Caco-2 (cell line): ENCODE measurements at regions of chr6 and their contacts with region 1.

Region 1: GRCh38 chr6:104771258-104771832 is 88.4 kb downstream of the HACE1 start:
- DNase-seq: no peak
- H3K4me3 ChIP-seq: no peak overlapping the region
- H3K4me3 Mint-ChIP-seq: no peak overlapping the region
- H3K27ac Mint-ChIP-seq: no peak overlapping the region
- H3K4me1 ChIP-seq: no peaks in the 10 kb centered on the region
- H3K4me1 Mint-ChIP-seq: no peaks in the 10 kb centered on the region
- H3K27me3 ChIP-seq: no peaks in the 10 kb centered on the region
- H3K27me3 Mint-ChIP-seq: no peaks in the 10 kb centered on the region
- CTCF ChIP-seq: peak; percentile 34 to 52

Region 2: DNA sequence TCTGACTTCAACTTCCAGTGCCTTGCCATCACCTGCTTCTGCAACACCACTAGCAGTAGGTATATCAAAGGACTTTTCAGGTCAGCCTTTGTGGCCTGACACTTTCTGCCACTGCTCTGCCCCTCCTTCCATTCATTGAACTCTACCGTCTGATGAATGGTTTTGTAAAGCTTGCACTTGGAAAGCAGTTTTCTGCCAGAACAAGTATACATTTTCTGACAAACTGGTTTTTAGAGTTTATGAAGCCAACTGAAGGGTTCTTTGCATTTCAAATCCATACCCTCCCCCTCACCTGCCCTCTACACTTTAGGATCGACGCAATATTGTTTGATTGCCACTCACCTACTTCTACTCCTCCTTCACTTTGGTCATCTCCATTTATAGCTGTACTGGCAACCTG is 514.7 kb before region 1 on chr6:
- CTCF ChIA-PET with region 1: no interaction called
- POLR2A ChIA-PET with region 1: no interaction called
- intact Hi-C with region 1: loop called (anchors 10 kb)
- DNase-seq: no peak
- H3K4me3 ChIP-seq: no peak overlapping the region
- H3K4me3 Mint-ChIP-seq: no peak overlapping the region
- H3K27ac Mint-ChIP-seq: no peak overlapping the region
- H3K4me1 ChIP-seq: peaks cover 42% of the 10 kb centered on the region
- H3K4me1 Mint-ChIP-seq: peaks cover 26% of the 10 kb centered on the region
- H3K27me3 ChIP-seq: no peaks in the 10 kb centered on the region
- H3K27me3 Mint-ChIP-seq: no peaks in the 10 kb centered on the region
- CTCF ChIP-seq: no peak

Region 3: DNA sequence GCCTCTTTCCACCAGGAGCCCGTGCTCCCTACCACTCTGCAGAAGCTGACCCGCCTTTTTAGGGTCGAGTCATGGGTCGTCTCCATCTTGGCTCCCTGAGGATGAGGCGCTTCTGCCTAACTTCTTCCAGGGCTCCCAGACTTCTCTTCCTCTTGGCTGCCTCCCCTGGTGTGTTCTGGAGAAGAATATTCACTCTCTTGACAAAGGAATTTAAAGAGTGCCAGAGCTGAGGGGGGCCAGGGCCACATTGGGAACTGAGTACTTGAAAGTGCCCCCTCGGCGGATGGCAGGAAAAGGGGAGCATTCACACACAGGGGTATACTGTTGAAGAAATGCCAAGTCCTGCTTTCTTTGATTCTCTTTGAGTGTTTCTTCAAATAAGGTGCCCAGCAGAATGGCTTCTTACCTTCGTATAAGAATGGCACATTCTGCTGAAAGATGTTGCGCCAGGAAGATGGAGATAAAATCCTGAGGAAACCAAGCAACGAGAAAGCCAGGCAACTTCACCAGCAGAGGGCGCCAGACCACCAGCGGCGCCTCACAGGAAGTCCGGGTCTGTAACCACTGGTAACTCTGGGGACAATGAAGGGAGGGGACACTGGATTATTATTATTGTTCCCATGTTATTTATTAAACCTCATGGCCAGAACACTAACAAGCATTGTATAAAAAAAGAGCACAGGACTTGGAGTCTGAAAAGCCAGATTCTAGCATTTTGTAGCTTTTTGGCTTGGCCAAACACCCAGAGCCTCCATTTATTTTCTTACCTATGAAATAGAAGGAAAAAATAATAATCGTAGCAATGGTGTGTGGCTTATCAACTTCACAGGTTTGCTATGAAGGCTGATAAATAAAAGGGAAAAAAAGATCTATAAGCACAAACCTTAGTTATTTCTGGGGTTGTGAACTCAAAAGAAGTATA is 88.4 kb before region 1 on chr6:
- CTCF ChIA-PET with region 1: no interaction called
- POLR2A ChIA-PET with region 1: no interaction called
- intact Hi-C with region 1: loop called (anchors 1 kb)
- DNase-seq: peak; percentile 68 to 71
- H3K4me3 ChIP-seq: no peak overlapping the region
- H3K4me3 Mint-ChIP-seq: no peak overlapping the region
- H3K27ac Mint-ChIP-seq: no peak overlapping the region
- H3K4me1 ChIP-seq: no peaks in the 10 kb centered on the region
- H3K4me1 Mint-ChIP-seq: no peaks in the 10 kb centered on the region
- H3K27me3 ChIP-seq: no peaks in the 10 kb centered on the region
- H3K27me3 Mint-ChIP-seq: no peaks in the 10 kb centered on the region
- CTCF ChIP-seq: peak; percentile 74 to 86

Region 4: GRCh38 chr6:104795363-104795762 is 24.0 kb after region 1 on chr6:
- CTCF ChIA-PET with region 1: no interaction called
- POLR2A ChIA-PET with region 1: no interaction called
- intact Hi-C with region 1: no loop called
- DNase-seq: peak in 1 of 2 experiments; percentile 28
- H3K4me3 ChIP-seq: no peak overlapping the region
- H3K4me3 Mint-ChIP-seq: no peak overlapping the region
- H3K27ac Mint-ChIP-seq: no peak overlapping the region
- H3K4me1 ChIP-seq: no peaks in the 10 kb centered on the region
- H3K4me1 Mint-ChIP-seq: no peaks in the 10 kb centered on the region
- H3K27me3 ChIP-seq: no peaks in the 10 kb centered on the region
- H3K27me3 Mint-ChIP-seq: no peaks in the 10 kb centered on the region
- CTCF ChIP-seq: no peak

Region 5: GRCh38 chr6:104855507-104855906 is 84.2 kb after region 1 on chr6:
- CTCF ChIA-PET with region 1: no interaction called
- POLR2A ChIA-PET with region 1: no interaction called
- intact Hi-C with region 1: no loop called
- DNase-seq: no peak
- H3K4me3 ChIP-seq: no peak overlapping the region
- H3K4me3 Mint-ChIP-seq: no peak overlapping the region
- H3K27ac Mint-ChIP-seq: no peak overlapping the region
- H3K4me1 ChIP-seq: no peaks in the 10 kb centered on the region
- H3K4me1 Mint-ChIP-seq: peaks cover 8% of the 10 kb centered on the region
- H3K27me3 ChIP-seq: no peaks in the 10 kb centered on the region
- H3K27me3 Mint-ChIP-seq: no peaks in the 10 kb centered on the region
- CTCF ChIP-seq: no peak

Region 6: GRCh38 chr6:104955927-104956730 is 184.8 kb after region 1 on chr6:
- CTCF ChIA-PET with region 1: no interaction called
- POLR2A ChIA-PET with region 1: no interaction called
- intact Hi-C with region 1: loop called (anchors 10 kb)
- DNase-seq: peak; percentile 42 to 60
- H3K4me3 ChIP-seq: peak overlapping the region; percentile 63
- H3K4me3 Mint-ChIP-seq: peak overlapping the region; percentile 91
- H3K27ac Mint-ChIP-seq: peak overlapping the region; percentile 95
- H3K4me1 ChIP-seq: 0 out of 2 replicates have a peak, but pooled peaks cover 6% of the 10 kb centered on the region
- H3K4me1 Mint-ChIP-seq: peaks cover 6% of the 10 kb centered on the region
- H3K27me3 ChIP-seq: no peaks in the 10 kb centered on the region
- H3K27me3 Mint-ChIP-seq: no peaks in the 10 kb centered on the region
- CTCF ChIP-seq: peak in 1 of 2 experiments; percentile 14